Activated CD4-positive, alpha-beta memory T cell treated with anti-CD3 and anti-CD28 coated beads for 36 hours (primary cell): ENCODE measurements at regions of chr3 and their contacts with region 1.

Region 1: DNA sequence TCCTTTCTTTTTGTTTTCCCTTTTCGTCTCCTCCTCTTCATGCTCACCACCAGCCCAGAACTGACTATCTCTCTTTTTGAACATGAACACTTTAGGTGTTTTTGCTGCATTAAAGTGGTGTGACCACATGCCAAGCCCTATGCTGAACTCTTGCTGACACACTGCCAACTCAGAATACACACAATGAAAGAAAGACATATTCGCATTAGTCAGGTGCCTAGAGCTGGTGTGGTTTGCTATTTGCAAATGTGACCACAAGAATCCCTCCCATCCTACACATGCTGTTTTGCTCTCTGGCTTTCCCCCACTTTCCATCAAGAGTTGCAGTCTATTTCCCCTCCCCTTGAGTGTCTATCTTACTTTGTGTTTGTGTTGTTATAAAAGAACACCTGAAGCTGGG is 967.8 kb upstream of the CFAP20DC start:
- DNase-seq: peak; percentile 71
- H3K4me3 Mint-ChIP-seq: peak overlapping the region; percentile 37
- H3K27ac Mint-ChIP-seq: peak overlapping the region; percentile 88
- H3K4me1 Mint-ChIP-seq: peaks cover 62% of the 10 kb centered on the region
- H3K27me3 Mint-ChIP-seq: no peaks in the 10 kb centered on the region

Region 2: DNA sequence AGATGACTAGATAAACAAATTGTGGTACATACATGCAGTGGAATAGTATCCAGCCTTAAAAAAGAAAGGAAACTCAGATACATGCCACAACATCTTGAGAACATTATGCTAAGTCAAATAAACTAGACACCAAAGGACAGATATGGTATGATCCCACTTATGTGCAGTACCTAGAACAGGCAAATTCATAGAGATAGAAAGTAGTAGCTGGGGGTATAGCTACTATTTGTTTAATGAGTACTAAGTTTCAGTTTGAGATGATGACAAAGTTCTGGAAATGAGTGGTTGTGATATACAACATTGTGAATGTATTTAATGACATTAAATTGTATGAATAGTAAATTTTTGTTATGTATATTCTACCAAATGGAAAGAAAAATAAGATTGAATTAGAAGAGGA is 490.6 kb before region 1 on chr3:
- CTCF ChIA-PET with region 1: no interaction called
- POLR2A ChIA-PET with region 1: no interaction called
- intact Hi-C with region 1: no loop called
- DNase-seq: no peak
- H3K4me3 Mint-ChIP-seq: no peak overlapping the region
- H3K27ac Mint-ChIP-seq: peak overlapping the region; percentile 0
- H3K4me1 Mint-ChIP-seq: peaks cover 15% of the 10 kb centered on the region
- H3K27me3 Mint-ChIP-seq: peaks cover 2% of the 10 kb centered on the region

Region 3: GRCh38 chr3:59867185-59868002 is 150.2 kb before region 1 on chr3:
- CTCF ChIA-PET with region 1: no interaction called
- POLR2A ChIA-PET with region 1: no interaction called
- intact Hi-C with region 1: loop called (anchors 1 kb)
- DNase-seq: no peak
- H3K4me3 Mint-ChIP-seq: no peak overlapping the region
- H3K27ac Mint-ChIP-seq: no peak overlapping the region
- H3K4me1 Mint-ChIP-seq: peaks cover 33% of the 10 kb centered on the region
- H3K27me3 Mint-ChIP-seq: no peaks in the 10 kb centered on the region

Region 4: GRCh38 chr3:59978979-59979378 is 38.7 kb before region 1 on chr3:
- CTCF ChIA-PET with region 1: no interaction called
- POLR2A ChIA-PET with region 1: no interaction called
- intact Hi-C with region 1: loop called (anchors 1 kb)
- DNase-seq: peak; percentile 40
- H3K4me3 Mint-ChIP-seq: no peak overlapping the region
- H3K27ac Mint-ChIP-seq: peak overlapping the region; percentile 74
- H3K4me1 Mint-ChIP-seq: peaks cover 37% of the 10 kb centered on the region
- H3K27me3 Mint-ChIP-seq: no peaks in the 10 kb centered on the region

Region 5: DNA sequence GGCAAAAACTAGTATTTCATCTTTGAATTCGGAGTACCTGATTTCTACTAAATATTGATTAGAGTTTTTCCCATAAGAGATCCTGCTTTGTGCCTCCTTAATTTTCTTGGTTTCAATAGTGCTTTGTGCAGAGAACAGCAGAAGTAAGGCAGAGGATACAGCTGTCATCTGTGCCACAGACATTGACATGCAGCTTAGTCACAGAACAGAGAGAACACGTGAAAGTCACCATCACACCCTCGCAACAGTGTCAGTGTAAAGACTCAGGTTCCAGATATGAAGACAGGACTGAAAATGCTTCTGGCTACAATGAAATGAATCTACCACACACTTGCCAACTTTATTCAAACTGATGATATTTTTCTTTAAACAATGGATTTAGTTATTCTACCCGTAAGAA is 25.1 kb before region 1 on chr3:
- CTCF ChIA-PET with region 1: no interaction called
- POLR2A ChIA-PET with region 1: no interaction called
- intact Hi-C with region 1: loop called (anchors 2 kb)
- DNase-seq: peak; percentile 37
- H3K4me3 Mint-ChIP-seq: no peak overlapping the region
- H3K27ac Mint-ChIP-seq: no peak overlapping the region
- H3K4me1 Mint-ChIP-seq: peaks cover 57% of the 10 kb centered on the region
- H3K27me3 Mint-ChIP-seq: no peaks in the 10 kb centered on the region

Region 6: DNA sequence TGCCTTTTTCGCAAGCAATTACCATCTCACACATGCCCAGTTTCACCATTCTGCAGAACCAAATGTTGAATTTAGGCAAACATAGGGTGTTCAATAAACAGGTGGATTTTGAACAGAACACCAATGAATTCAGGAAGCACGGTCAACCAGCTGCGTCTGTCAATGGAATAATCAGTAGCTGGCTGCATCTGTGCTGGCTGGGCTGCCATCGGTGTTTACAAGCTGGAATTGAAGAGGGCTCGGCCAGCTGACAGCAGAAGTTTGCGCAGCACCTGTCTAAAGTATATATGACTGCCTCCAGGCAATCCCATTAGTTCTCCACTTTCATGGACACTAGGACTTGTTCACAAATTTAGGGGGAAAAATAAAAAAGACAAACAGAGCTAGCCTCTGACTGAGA is 28.6 kb after region 1 on chr3:
- CTCF ChIA-PET with region 1: no interaction called
- POLR2A ChIA-PET with region 1: no interaction called
- intact Hi-C with region 1: loop called (anchors 1 kb)
- DNase-seq: no peak
- H3K4me3 Mint-ChIP-seq: no peak overlapping the region
- H3K27ac Mint-ChIP-seq: peak overlapping the region; percentile 47
- H3K4me1 Mint-ChIP-seq: peaks cover 63% of the 10 kb centered on the region
- H3K27me3 Mint-ChIP-seq: no peaks in the 10 kb centered on the region